ENCODE measurements at regions of chr4 and their contacts with region 1.

Region 1: GRCh38 chr4:26410385-26411293 is 79.6 kb downstream of the CCKAR start:
- DNase-seq: peak; percentile 44
- ATAC-seq: peak; percentile 85
- H3K4me3 ChIP-seq: no peak overlapping the region
- H3K27ac ChIP-seq: no peak overlapping the region
- H3K4me1 ChIP-seq: no peaks in the 10 kb centered on the region
- H3K27me3 ChIP-seq: no peaks in the 10 kb centered on the region
- CTCF ChIP-seq: peak; percentile 47 to 71 (median 53); a peak in 5 of 6 replicates
- EP300 ChIP-seq: no peak
- POLR2A ChIP-seq: no peak
- RAD21 ChIP-seq: peak; percentile 86

Region 2: DNA sequence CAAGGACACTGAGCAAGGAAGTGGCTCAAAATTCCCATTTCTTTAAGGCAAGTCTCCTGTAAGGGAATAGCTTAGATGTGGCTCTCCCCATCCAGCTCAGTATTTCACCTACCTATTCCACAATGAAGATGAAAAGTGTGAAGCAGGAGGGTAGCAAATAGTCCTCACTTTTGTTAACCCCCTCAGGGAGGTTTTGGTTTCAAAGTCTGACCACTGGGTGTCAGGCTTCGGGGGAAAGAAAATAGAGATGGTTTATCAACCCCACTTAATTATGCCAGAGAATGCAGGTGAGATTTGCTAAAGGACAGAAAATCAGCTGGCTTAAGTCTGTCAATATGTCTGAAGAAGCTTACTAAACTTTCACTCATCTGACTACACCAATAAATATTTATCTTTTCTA is 1895.8 kb before region 1 on chr4:
- CTCF ChIA-PET with region 1: no interaction called
- POLR2A ChIA-PET with region 1: no interaction called
- RAD21 ChIA-PET with region 1: no interaction called
- SMC1A ChIA-PET with region 1: no interaction called
- in situ Hi-C with region 1: no loop called
- intact Hi-C with region 1: no loop called
- DNase-seq: no peak
- ATAC-seq: peak; percentile 60
- H3K4me3 ChIP-seq: no peak overlapping the region
- H3K27ac ChIP-seq: no peak overlapping the region
- H3K4me1 ChIP-seq: no peaks in the 10 kb centered on the region
- H3K27me3 ChIP-seq: no peaks in the 10 kb centered on the region
- CTCF ChIP-seq: peak in 1 of 3 experiments; percentile 23; a peak in 2 of 6 replicates
- EP300 ChIP-seq: no peak
- POLR2A ChIP-seq: no peak
- RAD21 ChIP-seq: peak; percentile 31; the same call in 1 of the 2 replicates

Region 3: DNA sequence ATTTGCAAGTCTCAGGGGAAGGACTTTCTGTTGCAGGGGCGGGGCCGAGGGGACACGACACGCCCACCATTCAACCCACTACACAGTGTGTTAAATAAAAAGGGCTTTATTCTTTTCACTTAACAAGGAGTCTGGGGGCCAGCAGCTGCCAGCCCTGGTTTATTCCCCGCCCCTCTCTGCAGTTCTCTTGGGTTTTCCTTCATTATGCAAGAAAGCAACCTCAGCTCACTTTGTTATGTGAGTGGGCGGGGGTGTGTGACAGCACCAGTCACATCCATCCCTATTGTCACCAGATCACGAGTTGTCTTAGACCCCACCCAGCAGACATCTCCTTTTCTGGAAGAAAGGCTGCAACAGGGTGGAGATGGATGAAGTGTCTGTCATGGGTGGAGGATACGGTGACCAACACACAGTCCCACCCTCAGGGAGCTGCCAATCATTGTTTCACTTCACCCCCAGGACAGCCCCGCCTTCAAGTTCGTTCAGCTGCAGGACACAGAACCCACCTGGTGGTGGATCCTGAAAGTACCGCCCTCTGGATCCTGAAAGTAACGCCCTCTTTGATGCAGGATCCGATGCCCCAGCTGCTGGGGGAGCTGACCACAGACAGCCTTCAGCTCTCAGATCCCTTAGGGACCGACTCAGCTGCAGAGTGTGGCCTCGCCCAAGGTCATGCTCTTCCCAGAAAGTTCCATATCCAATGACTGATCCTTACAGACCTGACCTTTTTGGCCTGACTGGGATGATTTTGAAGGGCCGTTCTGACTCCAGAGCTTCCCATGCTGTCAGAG is 417.0 kb before region 1 on chr4:
- CTCF ChIA-PET with region 1: interaction called, 11 read pairs
- POLR2A ChIA-PET with region 1: interaction called, 3 read pairs
- RAD21 ChIA-PET with region 1: interaction called, 3 read pairs
- SMC1A ChIA-PET with region 1: no interaction called
- in situ Hi-C with region 1: no loop called
- intact Hi-C with region 1: loop called (anchors 2 kb)
- DNase-seq: no peak
- ATAC-seq: peak; percentile 87
- H3K4me3 ChIP-seq: no peak overlapping the region
- H3K27ac ChIP-seq: no peak overlapping the region
- H3K4me1 ChIP-seq: 0 out of 2 replicates have a peak, but pooled peaks cover 5% of the 10 kb centered on the region
- H3K27me3 ChIP-seq: no peaks in the 10 kb centered on the region
- CTCF ChIP-seq: peak; percentile 28 to 41 (median 35); a peak in 5 of 6 replicates
- EP300 ChIP-seq: no peak
- POLR2A ChIP-seq: no peak
- RAD21 ChIP-seq: peak; percentile 52

Region 4: GRCh38 chr4:26061248-26061986 is 349.2 kb before region 1 on chr4:
- CTCF ChIA-PET with region 1: interaction called, 33 read pairs
- POLR2A ChIA-PET with region 1: interaction called, 3 read pairs
- RAD21 ChIA-PET with region 1: interaction called, 6 read pairs
- SMC1A ChIA-PET with region 1: interaction called, 9 read pairs
- in situ Hi-C with region 1: loop called (anchors 10 kb)
- intact Hi-C with region 1: loop called (anchors 1 kb)
- DNase-seq: no peak
- ATAC-seq: peak; percentile 96
- H3K4me3 ChIP-seq: no peak overlapping the region
- H3K27ac ChIP-seq: no peak overlapping the region
- H3K4me1 ChIP-seq: peaks cover 9% of the 10 kb centered on the region; the same call in 1 of the 2 replicates
- H3K27me3 ChIP-seq: no peaks in the 10 kb centered on the region; a peak in 3 of 4 replicates
- CTCF ChIP-seq: peak; percentile 64 to 76 (median 76); a peak in 5 of 6 replicates
- EP300 ChIP-seq: no peak
- POLR2A ChIP-seq: no peak
- RAD21 ChIP-seq: peak; percentile 94

Region 5: DNA sequence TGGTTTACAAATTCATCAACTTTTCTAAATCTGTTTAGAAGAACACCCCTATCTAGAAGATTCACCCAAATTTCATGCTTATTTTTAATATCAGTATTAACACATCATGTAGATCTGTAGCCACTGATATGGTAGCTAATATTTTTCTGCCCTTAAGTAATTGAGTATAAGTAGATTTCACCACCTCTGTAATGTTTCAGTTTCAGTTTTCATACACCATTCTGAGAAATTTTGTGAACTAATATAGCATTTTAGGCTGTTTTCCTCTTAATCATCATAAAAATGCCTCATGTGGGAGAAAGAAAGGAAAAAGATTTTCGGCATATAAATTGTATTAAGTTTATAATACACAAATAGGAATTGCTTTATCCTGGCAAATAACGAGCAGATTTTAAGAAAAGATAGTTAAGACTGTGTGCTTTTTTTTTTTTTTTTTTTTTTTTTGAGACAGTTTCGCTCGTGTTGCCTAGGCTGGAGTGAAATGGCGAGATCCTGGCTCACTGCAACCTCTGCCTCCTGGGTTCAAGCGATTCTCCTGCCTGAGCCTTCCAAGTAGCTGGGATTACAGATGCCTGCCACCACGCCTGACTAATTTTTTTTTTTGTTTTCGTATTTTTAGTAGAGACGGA is 111.3 kb before region 1 on chr4:
- CTCF ChIA-PET with region 1: no interaction called
- POLR2A ChIA-PET with region 1: no interaction called
- RAD21 ChIA-PET with region 1: no interaction called
- SMC1A ChIA-PET with region 1: no interaction called
- in situ Hi-C with region 1: no loop called
- intact Hi-C with region 1: no loop called
- DNase-seq: no peak
- ATAC-seq: peak; percentile 92
- H3K4me3 ChIP-seq: no peak overlapping the region
- H3K27ac ChIP-seq: no peak overlapping the region; the same call in 1 of the 2 replicates
- H3K4me1 ChIP-seq: peaks cover 7% of the 10 kb centered on the region; the same call in 1 of the 2 replicates
- H3K27me3 ChIP-seq: no peaks in the 10 kb centered on the region
- CTCF ChIP-seq: no peak
- EP300 ChIP-seq: no peak
- POLR2A ChIP-seq: no peak
- RAD21 ChIP-seq: no peak

Region 6: GRCh38 chr4:26325191-26325590 is 85.4 kb before region 1 on chr4:
- CTCF ChIA-PET with region 1: interaction called, 474 read pairs
- POLR2A ChIA-PET with region 1: interaction called, 3 read pairs
- RAD21 ChIA-PET with region 1: interaction called, 170 read pairs
- SMC1A ChIA-PET with region 1: interaction called, 175 read pairs
- in situ Hi-C with region 1: loop called (anchors 5 kb)
- intact Hi-C with region 1: loop called (anchors 1 kb)
- DNase-seq: no peak
- ATAC-seq: peak; percentile 63
- H3K4me3 ChIP-seq: peak overlapping the region; percentile 10; the same call in 1 of the 2 replicates
- H3K27ac ChIP-seq: no peak overlapping the region
- H3K4me1 ChIP-seq: no peaks in the 10 kb centered on the region
- H3K27me3 ChIP-seq: no peaks in the 10 kb centered on the region
- CTCF ChIP-seq: peak; percentile 46 to 64 (median 56); a peak in 5 of 6 replicates
- EP300 ChIP-seq: no peak
- POLR2A ChIP-seq: no peak
- RAD21 ChIP-seq: peak; percentile 78

Region 7: DNA sequence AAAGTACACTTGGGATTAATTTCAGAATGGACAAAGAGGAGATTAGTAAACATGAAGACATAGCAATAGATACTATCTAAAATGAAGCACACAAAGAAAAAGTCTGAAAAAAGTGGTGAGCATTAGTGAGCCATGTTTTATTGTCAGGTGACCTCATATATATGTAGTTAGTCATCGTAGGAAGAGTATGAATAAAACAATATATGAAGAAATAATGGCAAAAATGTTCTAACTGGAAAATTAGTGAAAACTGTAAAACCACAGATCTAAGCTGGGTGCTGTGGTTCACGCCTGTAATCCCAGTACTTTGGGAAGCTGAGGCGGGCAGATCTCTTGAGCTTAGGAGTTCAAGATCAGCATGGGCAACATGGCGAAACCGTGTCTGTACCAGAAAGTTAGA is 22.0 kb before region 1 on chr4:
- CTCF ChIA-PET with region 1: interaction called, 11 read pairs
- POLR2A ChIA-PET with region 1: interaction called, 3 read pairs
- RAD21 ChIA-PET with region 1: interaction called, 5 read pairs
- SMC1A ChIA-PET with region 1: interaction called, 6 read pairs
- in situ Hi-C with region 1: no loop called
- intact Hi-C with region 1: no loop called
- DNase-seq: no peak
- ATAC-seq: no peak
- H3K4me3 ChIP-seq: no peak overlapping the region
- H3K27ac ChIP-seq: no peak overlapping the region
- H3K4me1 ChIP-seq: no peaks in the 10 kb centered on the region
- H3K27me3 ChIP-seq: no peaks in the 10 kb centered on the region
- CTCF ChIP-seq: no peak
- EP300 ChIP-seq: no peak
- POLR2A ChIP-seq: no peak
- RAD21 ChIP-seq: no peak